ENCODE measurements at regions of chr7 and their contacts with region 1.

Region 1: DNA sequence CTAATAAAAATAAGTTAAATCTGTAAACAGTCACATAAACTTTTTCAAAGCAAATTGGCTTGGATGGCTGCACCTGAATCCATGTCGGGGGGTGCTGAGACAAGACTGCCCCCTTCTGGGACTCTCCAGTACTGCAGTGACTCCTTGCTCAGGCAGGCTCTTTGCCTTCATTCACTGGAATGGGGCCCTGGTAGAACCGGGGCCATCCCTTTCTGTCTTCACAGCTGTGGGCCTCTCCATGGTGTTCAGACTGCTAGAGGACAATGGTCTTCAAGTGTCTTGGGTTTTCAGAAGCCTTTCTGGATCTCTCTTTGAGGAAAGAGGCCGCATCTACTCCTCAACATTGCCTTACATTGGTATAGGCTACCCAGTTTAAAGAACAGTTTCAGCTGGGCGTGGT is 16.1 kb upstream of the IMPDH1 start:
- DNase-seq: peak in 1 of 2 donors; percentile 41
- ATAC-seq: peak in 1 of 2 donors; percentile 59
- H3K4me3 ChIP-seq: no peak overlapping the region
- H3K27ac ChIP-seq: no peak overlapping the region
- H3K4me1 ChIP-seq: peaks cover 0 to 4% of the 10 kb centered on the region in 2 donors
- H3K27me3 ChIP-seq: no peaks in the 10 kb centered on the region
- CTCF ChIP-seq: peak; percentile 60 to 87 (median 79)
- POLR2A ChIP-seq: no peak

Region 2: GRCh38 chr7:128398016-128398840 is 27.6 kb before region 1 on chr7:
- in situ Hi-C with region 1: no loop called
- intact Hi-C with region 1: loop called (anchors 1 kb)
- DNase-seq: no peak
- ATAC-seq: peak in 1 of 2 donors; percentile 82
- H3K4me3 ChIP-seq: no peak overlapping the region
- H3K27ac ChIP-seq: no peak overlapping the region
- H3K4me1 ChIP-seq: no peaks in the 10 kb centered on the region
- H3K27me3 ChIP-seq: no peaks in the 10 kb centered on the region
- CTCF ChIP-seq: peak; percentile 71 to 96 (median 92)
- POLR2A ChIP-seq: no peak

Region 3: GRCh38 chr7:128462460-128462859 is 36.6 kb after region 1 on chr7:
- in situ Hi-C with region 1: loop called in 2 of 4 experiments (anchors 5 kb)
- intact Hi-C with region 1: loop called (anchors 1 kb)
- DNase-seq: no peak
- ATAC-seq: no peak
- H3K4me3 ChIP-seq: no peak overlapping the region
- H3K27ac ChIP-seq: no peak overlapping the region
- H3K4me1 ChIP-seq: no peaks in the 10 kb centered on the region
- H3K27me3 ChIP-seq: no peaks in the 10 kb centered on the region
- CTCF ChIP-seq: no peak
- POLR2A ChIP-seq: no peak